ENCODE measurements at regions of chr13 and their contacts with region 1.

Region 1: DNA sequence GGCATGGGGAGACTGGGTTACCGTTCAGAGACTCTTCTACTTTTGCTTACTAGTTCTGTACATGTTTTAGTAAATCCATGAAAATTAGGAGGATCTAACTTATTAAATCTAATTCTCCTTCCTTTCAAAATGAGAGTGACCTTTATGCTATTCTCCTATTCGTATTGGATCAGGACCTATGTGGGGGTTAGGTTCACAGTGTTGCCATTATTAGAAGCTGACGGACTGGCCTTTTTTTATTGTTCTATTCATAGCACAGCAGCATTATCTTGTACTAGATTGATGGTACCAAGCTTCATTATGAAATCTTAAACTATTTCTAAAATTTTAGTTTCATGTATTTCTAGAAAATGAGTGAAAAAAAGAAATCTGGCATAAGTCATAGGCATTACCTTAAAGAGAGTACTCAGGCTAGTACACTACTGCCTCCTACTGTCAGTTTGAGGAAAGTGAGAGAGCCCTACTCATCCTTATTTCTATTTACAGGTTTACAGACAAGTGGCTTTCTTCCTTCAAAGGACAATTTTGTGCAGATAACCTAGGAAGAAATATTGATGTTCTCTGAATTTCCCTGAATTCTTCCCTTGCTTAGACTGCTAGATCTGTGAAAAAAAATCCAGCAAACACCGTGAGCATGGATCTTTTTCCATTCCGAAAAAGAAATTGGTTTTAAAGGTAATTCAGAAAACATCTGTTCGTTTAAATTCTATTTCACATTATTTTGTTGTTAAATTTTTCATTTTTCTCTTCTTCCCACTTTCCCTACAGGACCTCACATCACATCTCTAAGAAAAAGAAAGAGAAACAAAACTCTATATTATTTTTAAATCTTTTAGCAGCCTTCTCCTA is 485.5 kb downstream of the DIAPH3 start:
- DNase-seq: peak in 1 of 2 donors; percentile 38
- ATAC-seq: peak; percentile 70 to 94 (median 88)
- H3K4me3 ChIP-seq: no peak overlapping the region
- H3K27ac ChIP-seq: peak overlapping the region in 7 of 10 donors; percentile 14 to 72 (median 53)
- H3K4me1 ChIP-seq: peaks cover 0 to 23% (median 11%) of the 10 kb centered on the region in 9 donors
- H3K27me3 ChIP-seq: no peaks in the 10 kb centered on the region
- CTCF ChIP-seq: peak; percentile 67 to 92 (median 84)

Region 2: DNA sequence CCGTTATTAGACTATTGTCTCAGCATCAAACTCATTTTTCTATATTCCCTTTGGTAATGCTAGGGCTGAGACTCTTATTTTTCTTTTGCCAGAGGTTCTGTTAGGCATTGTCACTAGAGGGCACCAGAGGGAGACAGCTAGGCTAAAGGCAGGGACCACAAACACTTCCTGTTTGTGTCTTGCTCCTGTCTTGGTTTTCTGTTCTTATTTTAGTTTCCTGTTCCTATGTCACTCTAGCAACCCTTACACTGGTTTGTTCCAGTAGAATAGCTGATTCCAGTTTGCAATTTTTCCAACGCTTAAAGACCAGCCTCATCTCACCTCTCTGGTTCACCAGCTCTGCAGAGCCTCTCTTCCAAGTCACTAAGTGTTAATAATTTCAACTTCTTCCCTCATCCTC is 286.5 kb before region 1 on chr13:
- intact Hi-C with region 1: loop called in 9 of 10 experiments (anchors 1 to 10 kb)
- DNase-seq: peak in 1 of 2 donors; percentile 85
- ATAC-seq: peak; percentile 26 to 89 (median 84)
- H3K4me3 ChIP-seq: no peak overlapping the region
- H3K27ac ChIP-seq: peak overlapping the region in 6 of 10 donors; percentile 2 to 61 (median 52)
- H3K4me1 ChIP-seq: peaks cover 0 to 14% (median 5%) of the 10 kb centered on the region in 9 donors
- H3K27me3 ChIP-seq: no peaks in the 10 kb centered on the region
- CTCF ChIP-seq: peak; percentile 78 to 93 (median 90)

Region 3: GRCh38 chr13:59477011-59477410 is 201.2 kb before region 1 on chr13:
- intact Hi-C with region 1: loop called in 3 of 10 experiments (anchors 10 kb)
- DNase-seq: no peak
- ATAC-seq: peak in 2 of 8 donors; percentile 29 to 45
- H3K4me3 ChIP-seq: no peak overlapping the region
- H3K27ac ChIP-seq: peak overlapping the region in 6 of 10 donors; percentile 16 to 73 (median 42)
- H3K4me1 ChIP-seq: peaks cover 10 to 65% (median 31%) of the 10 kb centered on the region in 9 donors
- H3K27me3 ChIP-seq: no peaks in the 10 kb centered on the region
- CTCF ChIP-seq: peak; percentile 9 to 54 (median 34)

Region 4: GRCh38 chr13:59531571-59532091 is 146.6 kb before region 1 on chr13:
- intact Hi-C with region 1: loop called in 1 of 10 experiments (anchors 5 kb)
- DNase-seq: peak; percentile 81 to 92
- ATAC-seq: peak; percentile 74 to 94 (median 90)
- H3K4me3 ChIP-seq: no peak overlapping the region
- H3K27ac ChIP-seq: peak overlapping the region in 9 of 10 donors; percentile 34 to 81 (median 69)
- H3K4me1 ChIP-seq: peaks cover 0 to 51% (median 29%) of the 10 kb centered on the region in 9 donors
- H3K27me3 ChIP-seq: no peaks in the 10 kb centered on the region
- CTCF ChIP-seq: no peak

Region 5: DNA sequence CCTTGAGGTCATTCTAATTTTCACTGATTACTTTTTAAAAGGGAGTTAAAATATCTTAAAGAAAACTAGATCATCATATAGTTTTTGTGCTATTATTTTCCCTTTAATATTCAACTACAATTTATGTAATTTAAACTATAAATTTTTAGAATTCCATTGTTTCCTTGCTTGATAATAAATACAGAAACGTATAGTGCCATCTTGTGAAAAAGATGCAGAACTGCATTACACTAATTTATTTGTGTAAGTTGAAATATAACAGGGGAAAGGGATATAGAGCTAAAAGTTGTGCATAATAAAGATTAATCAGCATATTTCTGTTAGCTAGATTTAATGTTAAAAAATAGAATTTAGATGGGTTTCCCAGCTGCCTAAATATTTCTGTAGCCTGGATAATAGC is 657.3 kb after region 1 on chr13:
- intact Hi-C with region 1: loop called in 1 of 10 experiments (anchors 10 kb)
- DNase-seq: no peak
- ATAC-seq: no peak
- H3K4me3 ChIP-seq: no peak overlapping the region
- H3K27ac ChIP-seq: no peak overlapping the region
- H3K4me1 ChIP-seq: no peaks in the 10 kb centered on the region
- H3K27me3 ChIP-seq: peaks cover 0 to 5% (median 0%) of the 10 kb centered on the region in 7 donors
- CTCF ChIP-seq: peak in 8 of 9 donors; percentile 18 to 71 (median 64)

Measured in heart right ventricle (tissue), 16 donors.